ENCODE measurements at regions of chr15 and their contacts with region 1.

Region 1: DNA sequence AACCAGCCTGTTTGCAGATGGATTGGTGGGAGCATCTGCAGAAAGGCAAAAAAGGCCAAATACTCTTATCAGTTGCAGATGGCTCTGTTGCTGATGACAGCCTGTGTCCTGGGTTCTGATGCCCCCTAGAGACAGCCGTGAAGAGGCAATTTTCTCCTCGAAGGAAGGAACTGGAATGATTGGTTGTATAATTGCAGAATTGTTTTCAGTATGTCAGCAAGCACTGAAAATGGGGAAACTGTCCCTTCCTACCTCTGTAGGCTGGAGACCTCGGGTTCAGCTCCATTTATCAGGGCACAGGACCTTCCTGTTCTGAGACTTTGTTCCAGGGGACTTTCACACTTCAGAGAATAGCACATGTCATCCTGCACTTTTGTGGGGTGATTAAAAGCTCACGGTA is 103.0 kb downstream of the PGPEP1L start:
- DNase-seq: peak; percentile 70
- H3K4me3 Mint-ChIP-seq: no peak overlapping the region
- H3K27ac Mint-ChIP-seq: peak overlapping the region; percentile 51
- H3K4me1 Mint-ChIP-seq: peaks cover 37% of the 10 kb centered on the region
- H3K27me3 Mint-ChIP-seq: no peaks in the 10 kb centered on the region
- CTCF ChIP-seq: peak; percentile 52

Region 2: GRCh38 chr15:98442379-98442833 is 462.1 kb before region 1 on chr15:
- CTCF ChIA-PET with region 1: interaction called, 4 read pairs
- POLR2A ChIA-PET with region 1: no interaction called
- intact Hi-C with region 1: loop called (anchors 1 kb)
- DNase-seq: peak; percentile 89
- H3K4me3 Mint-ChIP-seq: no peak overlapping the region
- H3K27ac Mint-ChIP-seq: no peak overlapping the region
- H3K4me1 Mint-ChIP-seq: peaks cover 9% of the 10 kb centered on the region
- H3K27me3 Mint-ChIP-seq: peaks cover 22% of the 10 kb centered on the region
- CTCF ChIP-seq: peak; percentile 89

Region 3: GRCh38 chr15:98779463-98780071 is 125.0 kb before region 1 on chr15:
- CTCF ChIA-PET with region 1: interaction called, 8 read pairs
- POLR2A ChIA-PET with region 1: no interaction called
- intact Hi-C with region 1: loop called (anchors 1 kb)
- DNase-seq: peak; percentile 69
- H3K4me3 Mint-ChIP-seq: peak overlapping the region; percentile 45
- H3K27ac Mint-ChIP-seq: no peak overlapping the region
- H3K4me1 Mint-ChIP-seq: no peaks in the 10 kb centered on the region
- H3K27me3 Mint-ChIP-seq: no peaks in the 10 kb centered on the region
- CTCF ChIP-seq: peak; percentile 58

Region 4: GRCh38 chr15:98865397-98866339 is 38.9 kb before region 1 on chr15:
- CTCF ChIA-PET with region 1: interaction called, 8 read pairs
- POLR2A ChIA-PET with region 1: interaction called, 12 read pairs
- intact Hi-C with region 1: loop called (anchors 1 kb)
- DNase-seq: peak; percentile 84
- H3K4me3 Mint-ChIP-seq: peak overlapping the region; percentile 74
- H3K27ac Mint-ChIP-seq: peak overlapping the region; percentile 96
- H3K4me1 Mint-ChIP-seq: peaks cover 29% of the 10 kb centered on the region
- H3K27me3 Mint-ChIP-seq: no peaks in the 10 kb centered on the region
- CTCF ChIP-seq: no peak

Region 5: DNA sequence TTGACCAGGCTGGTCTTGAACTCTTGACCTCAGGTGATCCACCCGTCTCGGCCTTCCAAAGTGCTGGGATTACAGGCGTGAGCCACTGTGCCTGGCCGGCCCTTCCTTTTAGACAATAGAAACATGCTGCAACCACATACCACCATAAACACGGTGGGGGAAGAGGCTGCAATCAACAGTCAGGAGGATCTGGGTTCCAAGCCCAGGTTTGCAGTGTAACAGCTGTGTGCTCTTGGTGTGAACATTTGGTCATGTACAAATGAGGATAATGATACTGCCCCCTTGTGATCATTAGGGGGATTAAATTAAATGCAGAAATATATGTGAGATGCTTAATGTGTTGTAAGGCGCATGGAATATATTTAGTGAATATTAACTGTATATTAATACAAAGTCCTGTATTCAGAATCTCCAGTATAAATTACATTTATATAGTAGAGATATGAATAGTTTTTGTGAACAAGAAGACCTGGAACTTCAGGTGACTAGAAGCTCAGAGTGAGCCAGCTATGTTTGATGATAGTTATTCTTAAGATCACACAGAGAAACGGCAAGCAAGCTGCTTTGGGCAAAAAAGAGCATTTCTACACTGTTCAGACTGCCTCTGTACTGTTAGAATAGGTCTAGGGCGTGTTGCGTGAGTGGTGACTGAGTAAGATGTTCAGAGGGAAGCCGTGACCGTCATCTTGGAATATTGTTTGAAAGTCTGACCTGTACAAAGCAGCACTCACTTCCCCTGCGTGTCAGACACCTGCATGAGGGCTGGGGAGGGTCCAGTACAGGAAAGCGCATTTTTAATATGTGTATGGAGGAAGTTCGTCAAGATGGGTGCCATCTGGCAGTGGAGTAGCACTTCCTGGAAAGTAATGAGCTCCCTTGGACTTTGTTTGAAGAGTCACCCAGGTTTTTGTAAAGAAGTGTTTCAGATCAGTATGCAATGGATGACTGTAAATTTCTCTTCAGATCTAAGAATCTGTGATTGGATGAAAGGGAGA is 22.7 kb before region 1 on chr15:
- CTCF ChIA-PET with region 1: interaction called, 12 read pairs
- POLR2A ChIA-PET with region 1: interaction called, 3 read pairs
- intact Hi-C with region 1: no loop called
- DNase-seq: peak; percentile 75
- H3K4me3 Mint-ChIP-seq: no peak overlapping the region
- H3K27ac Mint-ChIP-seq: peak overlapping the region; percentile 59
- H3K4me1 Mint-ChIP-seq: peaks cover 20% of the 10 kb centered on the region
- H3K27me3 Mint-ChIP-seq: no peaks in the 10 kb centered on the region
- CTCF ChIP-seq: peak; percentile 53

Region 6: GRCh38 chr15:99059010-99059981 is 154.8 kb after region 1 on chr15:
- CTCF ChIA-PET with region 1: no interaction called
- POLR2A ChIA-PET with region 1: no interaction called
- intact Hi-C with region 1: loop called (anchors 5 kb)
- DNase-seq: peak; percentile 50
- H3K4me3 Mint-ChIP-seq: peak overlapping the region; percentile 63
- H3K27ac Mint-ChIP-seq: no peak overlapping the region
- H3K4me1 Mint-ChIP-seq: no peaks in the 10 kb centered on the region
- H3K27me3 Mint-ChIP-seq: peaks cover 30% of the 10 kb centered on the region
- CTCF ChIP-seq: peak; percentile 81